CD8-positive, alpha-beta memory T cell (primary cell): ENCODE measurements at regions of chr1 and their contacts with region 1.

Region 1: DNA sequence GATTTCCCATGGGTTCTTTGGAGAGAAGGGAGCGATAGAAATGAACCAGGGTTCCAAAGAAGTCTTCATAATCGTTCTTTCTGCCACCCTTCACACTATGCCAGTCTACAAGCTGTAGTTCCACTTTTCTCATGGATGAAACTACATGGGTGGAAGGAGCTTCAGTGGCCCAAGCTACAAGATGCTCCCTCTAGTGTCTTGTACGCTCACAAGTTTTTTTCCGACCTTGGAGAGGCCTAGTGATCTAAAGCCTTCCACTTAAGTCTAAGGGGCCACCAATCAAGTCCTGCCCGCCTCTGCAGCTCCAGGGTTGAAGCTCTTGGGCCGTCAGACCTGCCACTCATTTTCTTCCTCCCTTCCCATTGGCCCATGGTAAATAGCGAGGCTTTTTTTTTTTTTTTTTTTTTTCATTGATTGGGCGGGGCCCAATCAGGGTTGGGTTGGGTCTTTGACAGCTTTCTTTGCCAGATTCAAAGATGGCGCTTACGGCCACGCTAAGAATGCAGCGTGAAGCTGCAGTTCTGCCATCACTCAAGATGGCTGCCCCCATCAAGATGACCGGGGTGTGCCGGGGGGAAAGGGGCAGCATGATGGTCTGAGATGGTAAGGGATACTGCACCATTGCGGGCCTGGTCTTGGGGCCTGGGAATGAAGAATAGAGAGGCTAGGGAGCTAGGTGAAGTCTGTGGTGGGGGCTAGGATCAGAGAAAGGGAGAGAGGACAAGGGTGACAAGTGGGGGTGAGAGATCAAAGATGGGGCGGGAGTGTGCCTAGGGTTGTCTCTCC is at the start of gene TOMM40L:
- DNase-seq: peak; percentile 80 to 96 (median 89)
- H3K4me3 ChIP-seq: peak within 1 kb of the TSS; percentile 88
- H3K4me3 Mint-ChIP-seq: peak within 1 kb of the TSS; percentile 84 to 99 (median 98)
- H3K27ac ChIP-seq: peak within 1 kb of the TSS; percentile 44
- H3K27ac Mint-ChIP-seq: peak within 1 kb of the TSS; percentile 65 to 99 (median 95)
- H3K4me1 ChIP-seq: peaks cover 26% of the 10 kb centered on the region
- H3K4me1 Mint-ChIP-seq: peaks cover 31 to 32% (median 31%) of the 10 kb centered on the region in 3 donors
- H3K27me3 ChIP-seq: no peaks in the 10 kb centered on the region
- H3K27me3 Mint-ChIP-seq: peaks cover 0 to 3% of the 10 kb centered on the region in 2 donors
- total RNA-seq, gene TOMM40L: 24.7 to 26.1 TPM

Region 2: DNA sequence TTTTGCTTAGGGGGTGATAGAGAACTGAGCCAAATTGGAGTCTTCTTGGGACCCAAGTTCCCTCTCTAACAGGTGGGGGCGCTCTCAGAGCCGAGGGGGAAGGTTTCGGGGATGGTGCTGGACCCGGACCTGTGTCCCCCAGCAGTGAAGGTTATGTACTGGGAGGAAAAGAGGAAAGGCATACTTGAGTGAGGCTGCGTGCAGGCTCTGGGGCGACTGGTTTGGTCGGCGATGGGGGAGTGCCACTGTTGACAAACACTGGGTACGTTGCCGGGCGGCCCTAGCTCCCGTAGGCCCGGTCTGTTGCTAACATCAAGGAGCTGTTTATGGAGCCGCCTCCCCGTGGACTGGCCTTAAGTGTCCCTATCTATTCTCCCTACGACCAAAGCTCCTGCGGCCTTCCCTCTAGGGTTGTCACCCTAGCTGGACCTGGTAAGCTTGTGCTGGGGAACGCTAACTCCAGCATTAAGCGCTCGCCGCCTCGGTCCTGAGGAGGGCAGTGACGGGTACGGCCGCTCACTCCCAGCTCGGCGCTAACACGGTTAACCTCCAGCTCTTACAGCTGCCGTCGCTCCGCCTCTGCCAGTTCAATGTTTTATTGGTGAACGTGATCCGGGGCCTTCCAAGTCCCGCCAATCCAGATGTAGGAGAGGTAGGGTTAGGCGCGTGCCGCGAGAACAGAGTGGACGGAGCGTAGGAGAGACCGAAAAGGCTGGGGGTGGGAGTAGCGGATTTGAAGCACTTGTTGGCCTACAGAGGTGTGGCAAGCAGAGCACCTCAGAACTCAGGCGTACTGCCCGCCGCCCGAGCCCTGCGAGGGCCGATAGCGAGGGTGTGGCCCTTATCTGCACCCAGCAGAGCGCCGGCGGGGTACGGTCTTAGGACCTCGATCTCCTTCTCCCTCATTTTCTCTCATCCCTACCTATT is 59.7 kb before region 1 on chr1 and contains the start of gene PPOX:
- CTCF ChIA-PET with region 1: interaction called, 30 read pairs
- POLR2A ChIA-PET with region 1: interaction called, 8 read pairs
- DNase-seq: peak; percentile 88 to 97 (median 93)
- H3K4me3 ChIP-seq: peak within 1 kb of the TSS; percentile 81
- H3K4me3 Mint-ChIP-seq: peak within 1 kb of the TSS; percentile 87 to 96 (median 93)
- H3K27ac ChIP-seq: peak within 1 kb of the TSS; percentile 95
- H3K27ac Mint-ChIP-seq: peak within 1 kb of the TSS; percentile 96 to 100 (median 99)
- H3K4me1 ChIP-seq: peaks cover 27% of the 10 kb centered on the region
- H3K4me1 Mint-ChIP-seq: peaks cover 43 to 76% (median 66%) of the 10 kb centered on the region in 3 donors
- H3K27me3 ChIP-seq: no peaks in the 10 kb centered on the region
- H3K27me3 Mint-ChIP-seq: no peaks in the 10 kb centered on the region
- total RNA-seq, gene PPOX: 24.4 to 31.3 TPM

Region 3: GRCh38 chr1:161192476-161193465 is 33.0 kb before region 1 on chr1:
- CTCF ChIA-PET with region 1: interaction called, 66 read pairs
- POLR2A ChIA-PET with region 1: no interaction called
- DNase-seq: peak; percentile 43 to 76 (median 63)
- H3K4me3 ChIP-seq: no peak overlapping the region
- H3K4me3 Mint-ChIP-seq: peak overlapping the region in 5 of 7 donors; percentile 13 to 86 (median 61)
- H3K27ac ChIP-seq: no peak overlapping the region
- H3K27ac Mint-ChIP-seq: peak overlapping the region; percentile 67 to 99 (median 90)
- H3K4me1 ChIP-seq: peaks cover 48% of the 10 kb centered on the region
- H3K4me1 Mint-ChIP-seq: peaks cover 40 to 61% (median 45%) of the 10 kb centered on the region in 3 donors
- H3K27me3 ChIP-seq: no peaks in the 10 kb centered on the region
- H3K27me3 Mint-ChIP-seq: peaks cover 0 to 3% of the 10 kb centered on the region in 2 donors

Region 4: DNA sequence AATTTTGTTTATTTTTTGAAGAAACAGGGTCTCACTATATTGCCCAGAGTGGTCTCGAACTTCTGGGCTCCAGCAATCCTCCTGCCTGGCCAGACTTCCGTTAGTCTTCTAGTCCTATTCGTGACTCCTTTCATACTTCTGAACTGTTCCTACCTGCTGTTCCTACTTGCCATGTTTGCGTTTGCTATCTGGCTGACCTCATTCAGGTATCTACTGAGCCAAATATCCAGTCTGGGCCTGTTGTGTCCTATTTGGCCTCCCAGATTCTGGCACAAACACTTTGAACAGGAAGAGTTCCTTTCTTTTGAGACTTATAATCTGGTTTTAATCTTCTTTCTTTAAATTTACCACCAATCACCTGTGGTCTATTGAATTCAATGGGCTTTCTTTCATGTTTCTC is 19.2 kb after region 1 on chr1:
- CTCF ChIA-PET with region 1: interaction called, 6 read pairs
- POLR2A ChIA-PET with region 1: interaction called, 10 read pairs
- DNase-seq: no peak
- H3K4me3 ChIP-seq: no peak overlapping the region
- H3K4me3 Mint-ChIP-seq: no peak overlapping the region
- H3K27ac ChIP-seq: no peak overlapping the region
- H3K27ac Mint-ChIP-seq: peak overlapping the region in 1 of 8 donors; percentile 0
- H3K4me1 ChIP-seq: no peaks in the 10 kb centered on the region
- H3K4me1 Mint-ChIP-seq: no peaks in the 10 kb centered on the region
- H3K27me3 ChIP-seq: no peaks in the 10 kb centered on the region
- H3K27me3 Mint-ChIP-seq: peaks cover 0 to 26% of the 10 kb centered on the region in 2 donors

Region 5: DNA sequence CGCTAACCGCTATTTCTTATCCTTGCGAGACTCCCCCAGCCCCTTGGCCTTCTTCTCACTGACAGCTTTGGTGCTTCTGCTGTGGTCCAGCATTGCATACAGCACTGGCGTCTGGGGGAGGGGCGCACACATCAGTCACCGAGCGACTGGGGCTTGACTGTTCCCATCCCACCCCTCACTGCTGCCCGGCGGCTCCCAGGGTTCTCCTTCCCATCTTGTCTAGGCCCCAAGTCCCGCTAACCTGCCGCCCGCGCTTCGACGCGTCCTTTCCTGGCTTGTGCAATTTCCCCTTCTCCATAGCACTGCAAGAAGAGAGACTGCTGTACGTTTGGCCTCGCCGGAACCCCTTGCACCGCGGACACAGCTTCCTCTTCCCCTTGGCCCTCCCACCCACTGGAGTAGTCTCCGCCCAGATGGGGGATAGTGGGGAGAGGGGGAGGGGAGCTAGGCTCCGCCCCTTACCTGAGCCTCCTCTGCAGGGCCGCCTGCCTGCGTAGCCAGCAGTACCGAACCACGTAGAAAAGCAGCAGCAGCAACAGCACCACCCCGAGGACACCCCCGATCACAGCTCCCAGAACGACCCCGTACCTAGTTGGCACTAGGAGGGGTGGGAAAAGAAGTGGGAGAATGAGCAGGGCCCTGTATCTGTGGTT is 80.3 kb after region 1 on chr1:
- CTCF ChIA-PET with region 1: interaction called, 35 read pairs
- POLR2A ChIA-PET with region 1: interaction called, 4 read pairs
- DNase-seq: peak; percentile 73 to 95 (median 92)
- H3K4me3 ChIP-seq: peak overlapping the region; percentile 89
- H3K4me3 Mint-ChIP-seq: peak overlapping the region; percentile 91 to 99 (median 93)
- H3K27ac ChIP-seq: peak overlapping the region; percentile 78
- H3K27ac Mint-ChIP-seq: peak overlapping the region; percentile 79 to 100 (median 93)
- H3K4me1 ChIP-seq: peaks cover 30% of the 10 kb centered on the region
- H3K4me1 Mint-ChIP-seq: peaks cover 30 to 49% (median 42%) of the 10 kb centered on the region in 3 donors
- H3K27me3 ChIP-seq: no peaks in the 10 kb centered on the region
- H3K27me3 Mint-ChIP-seq: no peaks in the 10 kb centered on the region

Region 6: DNA sequence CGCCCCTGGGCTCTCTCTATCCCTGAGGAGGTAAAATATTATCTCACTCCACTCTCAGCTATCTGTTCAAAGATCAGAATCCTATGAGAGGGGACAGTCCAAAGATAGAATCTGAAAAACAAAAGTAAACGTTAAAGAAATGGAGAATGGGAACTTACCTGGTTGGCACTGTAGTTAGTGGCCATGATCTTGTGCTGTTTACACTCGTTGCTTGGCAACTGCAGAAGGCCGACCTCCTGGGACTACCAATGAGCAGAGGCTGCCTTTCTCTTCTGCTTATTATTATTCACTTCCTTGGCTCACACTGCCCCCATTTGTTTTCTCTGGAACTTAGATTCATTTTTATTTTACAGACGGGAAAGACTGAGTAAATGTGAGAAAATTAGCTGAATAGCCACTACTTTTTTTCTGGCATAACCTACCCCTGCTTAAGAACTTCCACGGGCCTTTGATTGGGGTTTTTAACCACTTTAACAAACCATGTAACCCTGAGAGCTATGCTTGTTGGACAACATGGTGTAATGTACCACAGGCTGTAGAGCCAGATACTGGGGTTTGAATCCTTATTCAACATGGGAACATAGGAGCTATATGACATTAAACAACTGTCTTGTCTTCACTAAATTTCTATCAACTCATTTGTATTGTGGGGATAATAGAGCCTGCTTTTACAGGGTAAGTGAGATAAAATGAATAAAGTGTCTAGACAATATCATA is 142.1 kb after region 1 on chr1 and contains the start of gene CFAP126:
- CTCF ChIA-PET with region 1: interaction called, 13 read pairs
- POLR2A ChIA-PET with region 1: no interaction called
- DNase-seq: peak; percentile 31 to 83 (median 60)
- H3K4me3 ChIP-seq: no peak within 1 kb of the TSS
- H3K4me3 Mint-ChIP-seq: no peak within 1 kb of the TSS
- H3K27ac ChIP-seq: peak within 1 kb of the TSS; percentile 21
- H3K27ac Mint-ChIP-seq: peak within 1 kb of the TSS; percentile 59 to 93 (median 82)
- H3K4me1 ChIP-seq: peaks cover 4% of the 10 kb centered on the region
- H3K4me1 Mint-ChIP-seq: peaks cover 6 to 8% (median 8%) of the 10 kb centered on the region in 3 donors
- H3K27me3 ChIP-seq: no peaks in the 10 kb centered on the region
- H3K27me3 Mint-ChIP-seq: no peaks in the 10 kb centered on the region
- total RNA-seq, gene CFAP126: not detected

Region 7: DNA sequence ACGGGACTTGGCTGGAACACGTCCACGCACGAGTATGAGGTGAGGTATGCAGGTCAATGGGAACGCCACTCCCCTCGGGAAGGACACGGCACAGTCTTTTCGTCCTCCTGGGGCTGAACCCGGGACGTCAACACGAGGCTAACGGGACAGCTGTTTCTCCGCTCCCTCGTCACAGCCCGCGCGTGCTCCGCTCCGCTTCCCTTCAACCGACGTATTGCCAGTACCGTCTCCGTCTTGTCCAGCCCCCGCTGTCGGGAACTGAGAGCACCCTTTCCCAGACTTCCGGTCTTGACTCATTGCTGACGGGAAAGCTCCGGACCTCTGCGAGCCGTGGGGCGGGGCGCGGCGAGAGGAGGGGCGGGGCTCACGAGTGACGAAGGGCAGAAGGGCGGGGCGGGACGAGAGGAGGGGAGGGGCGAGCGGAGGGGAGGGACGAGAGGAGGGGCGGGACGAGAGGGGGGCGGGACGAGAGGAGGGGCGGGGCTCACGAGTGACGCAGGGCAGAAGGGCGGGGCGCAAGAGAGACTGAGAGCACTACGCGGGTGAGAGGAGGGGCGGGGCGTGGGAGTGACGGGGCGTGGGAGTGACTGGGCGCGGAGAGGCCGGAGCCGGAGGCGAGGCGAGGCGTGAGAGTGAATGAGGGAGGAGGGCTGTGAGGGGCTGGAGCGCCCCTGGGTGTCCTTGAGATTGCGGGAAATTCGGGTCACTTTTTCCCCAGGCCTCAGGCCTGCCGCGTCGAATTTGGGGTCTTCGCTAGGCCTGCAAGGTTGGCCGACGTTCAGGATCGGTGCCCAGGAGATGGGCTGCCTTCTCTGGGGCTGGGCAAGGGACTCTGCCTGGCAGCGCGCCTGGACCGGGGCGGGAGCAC is 164.2 kb after region 1 on chr1:
- CTCF ChIA-PET with region 1: interaction called, 98 read pairs
- POLR2A ChIA-PET with region 1: interaction called, 16 read pairs
- DNase-seq: peak; percentile 89 to 98 (median 95)
- H3K4me3 ChIP-seq: peak overlapping the region; percentile 95
- H3K4me3 Mint-ChIP-seq: peak overlapping the region; percentile 84 to 97 (median 91)
- H3K27ac ChIP-seq: peak overlapping the region; percentile 85
- H3K27ac Mint-ChIP-seq: peak overlapping the region; percentile 93 to 99 (median 96)
- H3K4me1 ChIP-seq: peaks cover 14% of the 10 kb centered on the region
- H3K4me1 Mint-ChIP-seq: peaks cover 14 to 35% (median 28%) of the 10 kb centered on the region in 3 donors
- H3K27me3 ChIP-seq: no peaks in the 10 kb centered on the region
- H3K27me3 Mint-ChIP-seq: no peaks in the 10 kb centered on the region

Region 8: GRCh38 chr1:161402446-161402845 is 176.7 kb after region 1 on chr1:
- CTCF ChIA-PET with region 1: no interaction called
- POLR2A ChIA-PET with region 1: no interaction called
- DNase-seq: no peak
- H3K4me3 ChIP-seq: no peak overlapping the region
- H3K4me3 Mint-ChIP-seq: peak overlapping the region in 1 of 7 donors; percentile 78
- H3K27ac ChIP-seq: no peak overlapping the region
- H3K27ac Mint-ChIP-seq: peak overlapping the region in 1 of 8 donors; percentile 57
- H3K4me1 ChIP-seq: peaks cover 18% of the 10 kb centered on the region
- H3K4me1 Mint-ChIP-seq: peaks cover 30 to 56% (median 53%) of the 10 kb centered on the region in 3 donors
- H3K27me3 ChIP-seq: no peaks in the 10 kb centered on the region
- H3K27me3 Mint-ChIP-seq: peaks cover 0 to 13% of the 10 kb centered on the region in 2 donors

Region 9: DNA sequence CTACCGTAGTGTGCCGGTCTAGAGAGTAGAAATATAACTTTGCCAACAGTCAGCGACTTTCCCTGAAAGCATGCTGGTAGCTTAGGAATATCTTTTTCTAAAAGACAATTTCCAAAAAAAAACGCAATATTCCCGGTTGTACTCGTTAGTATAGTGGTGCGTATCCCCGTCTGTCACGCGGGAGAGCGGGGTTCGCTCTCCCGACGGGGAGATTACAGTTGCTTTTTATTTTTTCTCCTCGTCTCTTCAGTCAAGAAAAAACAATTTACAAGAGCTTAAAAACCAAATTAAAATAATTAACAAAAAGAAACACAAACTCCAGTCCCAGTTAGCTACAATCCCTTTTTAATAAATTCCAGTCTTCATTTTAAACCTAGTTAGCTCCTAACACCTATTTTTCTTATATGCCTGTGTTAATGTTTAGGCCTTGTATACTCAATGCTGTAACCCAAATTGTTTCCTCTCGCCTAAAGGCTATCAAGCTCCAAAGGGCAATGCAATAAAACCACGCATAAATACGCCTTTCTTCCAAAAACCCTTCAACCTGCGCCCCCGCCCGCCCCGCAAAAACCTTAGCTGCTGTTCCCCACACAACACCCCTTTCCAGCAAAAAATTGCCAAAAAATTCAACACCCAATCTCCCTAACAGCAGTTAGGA is 306.4 kb after region 1 on chr1:
- CTCF ChIA-PET with region 1: no interaction called
- POLR2A ChIA-PET with region 1: no interaction called
- DNase-seq: no peak
- H3K4me3 ChIP-seq: no peak overlapping the region
- H3K4me3 Mint-ChIP-seq: peak overlapping the region in 5 of 7 donors; percentile 34 to 69 (median 41)
- H3K27ac ChIP-seq: peak overlapping the region; percentile 76
- H3K27ac Mint-ChIP-seq: peak overlapping the region in 4 of 8 donors; percentile 17 to 83 (median 67)
- H3K4me1 ChIP-seq: peaks cover 6% of the 10 kb centered on the region
- H3K4me1 Mint-ChIP-seq: peaks cover 14 to 21% (median 16%) of the 10 kb centered on the region in 3 donors
- H3K27me3 ChIP-seq: no peaks in the 10 kb centered on the region
- H3K27me3 Mint-ChIP-seq: peaks cover 0 to 14% of the 10 kb centered on the region in 2 donors